Stomach (tissue), 19 donors: ENCODE measurements at regions of chr7 and their contacts with region 1.

Region 1: DNA sequence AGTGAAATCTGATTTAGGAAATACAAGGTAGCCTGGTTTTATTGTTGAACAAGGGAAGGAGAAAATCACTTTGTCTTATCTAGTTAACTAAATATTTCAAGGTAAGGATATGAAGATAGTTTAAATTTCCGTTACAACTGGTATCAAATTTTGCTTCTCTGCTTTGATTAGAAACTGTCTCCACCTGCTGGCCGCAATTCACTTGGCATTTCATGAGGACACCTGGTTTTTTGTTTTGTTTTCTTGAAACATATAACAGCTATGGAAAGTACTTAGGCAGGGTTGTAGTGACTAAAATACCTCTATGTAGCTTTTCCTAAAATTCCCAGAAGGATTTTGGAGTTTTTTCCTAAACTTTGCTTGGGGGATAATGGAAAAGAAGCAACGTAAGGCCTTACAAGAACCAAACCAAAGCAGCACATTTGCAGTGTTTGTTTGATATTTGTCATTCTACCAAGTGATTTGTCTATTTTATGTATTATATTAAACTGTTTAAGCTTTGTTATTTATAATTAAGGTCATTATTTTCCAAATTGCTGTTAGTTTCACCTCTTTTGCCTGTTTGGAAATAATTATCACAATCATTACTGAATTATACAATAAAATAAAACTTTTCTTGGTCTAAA is 73.6 kb downstream of the AHCYL2 start:
- DNase-seq: peak; percentile 61 to 76
- H3K4me3 ChIP-seq: no peak overlapping the region
- H3K27ac ChIP-seq: no peak overlapping the region
- H3K4me1 ChIP-seq: peaks cover 0 to 20% (median 6%) of the 10 kb centered on the region in 4 donors
- H3K27me3 ChIP-seq: no peaks in the 10 kb centered on the region
- CTCF ChIP-seq: peak in 5 of 7 experiments; percentile 44 to 66 (median 60)
- EP300 ChIP-seq: no peak
- POLR2A ChIP-seq: no peak

Region 2: GRCh38 chr7:129218514-129219062 is 79.8 kb before region 1 on chr7:
- intact Hi-C with region 1: loop called (anchors 10 kb)
- DNase-seq: peak; percentile 89 to 94
- H3K4me3 ChIP-seq: no peak overlapping the region
- H3K27ac ChIP-seq: no peak overlapping the region
- H3K4me1 ChIP-seq: peaks cover 0 to 9% (median 6%) of the 10 kb centered on the region in 4 donors
- H3K27me3 ChIP-seq: peaks cover 0 to 11% (median 0%) of the 10 kb centered on the region in 3 donors
- CTCF ChIP-seq: peak in 5 of 7 experiments; percentile 82 to 91 (median 87)
- EP300 ChIP-seq: no peak
- POLR2A ChIP-seq: no peak

Region 3: GRCh38 chr7:129522088-129522970 is 223.9 kb after region 1 on chr7:
- intact Hi-C with region 1: no loop called
- DNase-seq: peak in 1 of 2 donors; percentile 21
- H3K4me3 ChIP-seq: no peak overlapping the region
- H3K27ac ChIP-seq: no peak overlapping the region
- H3K4me1 ChIP-seq: no peaks in the 10 kb centered on the region
- H3K27me3 ChIP-seq: peaks cover 0 to 33% (median 7%) of the 10 kb centered on the region in 3 donors
- CTCF ChIP-seq: no peak
- EP300 ChIP-seq: no peak
- POLR2A ChIP-seq: no peak